ENCODE measurements at regions of chr1 and their contacts with region 1.

Region 1: GRCh38 chr1:92080128-92080985 is at the start of gene BTBD8:
- DNase-seq: peak; percentile 67 to 87 (median 85)
- ATAC-seq: peak; percentile 98
- H3K4me3 ChIP-seq: peak within 1 kb of the TSS; percentile 79
- H3K4me3 Mint-ChIP-seq: peak within 1 kb of the TSS; percentile 87 to 99 (median 98)
- H3K27ac ChIP-seq: peak within 1 kb of the TSS; percentile 74
- H3K27ac Mint-ChIP-seq: peak within 1 kb of the TSS; percentile 85 to 97 (median 93)
- H3K4me1 ChIP-seq: peaks cover 0 to 3% of the 10 kb centered on the region in 2 donors
- H3K4me1 Mint-ChIP-seq: peaks cover 5 to 36% (median 29%) of the 10 kb centered on the region in 7 donors
- H3K27me3 ChIP-seq: no peaks in the 10 kb centered on the region
- H3K27me3 Mint-ChIP-seq: no peaks in the 10 kb centered on the region
- total RNA-seq, gene BTBD8: 2.4 to 11.4 (median 5.3) TPM

Region 2: GRCh38 chr1:92030656-92031107 is 49.7 kb before region 1 on chr1:
- CTCF ChIA-PET with region 1: no interaction called
- POLR2A ChIA-PET with region 1: no interaction called
- intact Hi-C with region 1: loop called in 1 of 2 experiments (anchors 5 kb)
- DNase-seq: peak in 1 of 9 donors; percentile 5
- ATAC-seq: no peak
- H3K4me3 ChIP-seq: peak overlapping the region; percentile 55
- H3K4me3 Mint-ChIP-seq: peak overlapping the region; percentile 70 to 87 (median 80)
- H3K27ac ChIP-seq: no peak overlapping the region
- H3K27ac Mint-ChIP-seq: peak overlapping the region in 4 of 9 donors; percentile 16 to 63 (median 52)
- H3K4me1 ChIP-seq: peaks cover 4 to 7% of the 10 kb centered on the region in 2 donors
- H3K4me1 Mint-ChIP-seq: peaks cover 5 to 24% (median 18%) of the 10 kb centered on the region in 7 donors
- H3K27me3 ChIP-seq: peaks cover 0 to 3% of the 10 kb centered on the region in 2 donors
- H3K27me3 Mint-ChIP-seq: peaks cover 16 to 40% (median 20%) of the 10 kb centered on the region in 5 donors

Region 3: DNA sequence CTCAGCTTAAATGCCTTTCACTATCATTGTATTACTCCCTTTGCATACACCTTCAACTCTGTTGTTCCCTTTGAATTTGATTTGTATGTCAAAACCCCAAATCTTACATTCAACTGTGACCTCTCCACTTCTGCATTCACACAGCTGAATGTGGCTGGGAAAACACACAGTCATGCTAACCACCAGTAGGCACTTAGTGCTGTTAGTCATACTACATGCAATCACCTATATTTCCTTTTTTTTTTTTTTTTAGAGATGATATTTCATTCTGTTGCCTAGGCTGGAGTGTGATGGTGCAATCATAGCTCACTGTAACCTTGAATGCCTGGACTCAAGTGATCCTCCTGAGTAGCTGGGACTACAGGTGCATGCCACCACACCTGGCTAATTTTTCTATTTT is 16.0 kb after region 1 on chr1:
- CTCF ChIA-PET with region 1: no interaction called
- POLR2A ChIA-PET with region 1: no interaction called
- intact Hi-C with region 1: no loop called
- DNase-seq: no peak
- ATAC-seq: peak; percentile 91
- H3K4me3 ChIP-seq: no peak overlapping the region
- H3K4me3 Mint-ChIP-seq: no peak overlapping the region
- H3K27ac ChIP-seq: no peak overlapping the region
- H3K27ac Mint-ChIP-seq: no peak overlapping the region
- H3K4me1 ChIP-seq: no peaks in the 10 kb centered on the region
- H3K4me1 Mint-ChIP-seq: peaks cover 0 to 14% (median 9%) of the 10 kb centered on the region in 7 donors
- H3K27me3 ChIP-seq: no peaks in the 10 kb centered on the region
- H3K27me3 Mint-ChIP-seq: no peaks in the 10 kb centered on the region

Region 4: DNA sequence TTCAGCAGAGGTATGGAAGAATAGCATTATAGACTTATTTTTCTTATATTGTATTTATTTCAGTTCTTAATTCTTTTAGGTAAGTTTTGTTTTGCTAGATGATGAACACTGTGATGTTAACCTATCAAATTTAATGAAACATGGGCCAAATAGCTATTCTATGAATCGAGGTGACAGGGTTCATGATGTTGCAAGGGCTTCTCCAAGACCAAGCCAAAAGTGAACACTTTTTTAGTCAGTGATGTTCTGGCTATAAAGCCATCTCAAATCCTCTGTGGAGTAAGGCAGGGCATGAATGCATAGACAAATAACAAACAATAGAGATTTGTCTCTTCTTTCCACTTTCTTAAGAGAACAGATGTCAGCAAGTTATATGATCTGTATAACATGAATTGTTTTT is 164.0 kb after region 1 on chr1:
- CTCF ChIA-PET with region 1: no interaction called
- POLR2A ChIA-PET with region 1: no interaction called
- intact Hi-C with region 1: loop called in 1 of 2 experiments (anchors 5 kb)
- DNase-seq: no peak
- ATAC-seq: no peak
- H3K4me3 ChIP-seq: no peak overlapping the region
- H3K4me3 Mint-ChIP-seq: no peak overlapping the region
- H3K27ac ChIP-seq: no peak overlapping the region
- H3K27ac Mint-ChIP-seq: peak overlapping the region in 4 of 9 donors; percentile 15 to 53 (median 32)
- H3K4me1 ChIP-seq: no peaks in the 10 kb centered on the region
- H3K4me1 Mint-ChIP-seq: peaks cover 0 to 2% (median 0%) of the 10 kb centered on the region in 7 donors
- H3K27me3 ChIP-seq: no peaks in the 10 kb centered on the region
- H3K27me3 Mint-ChIP-seq: peaks cover 0 to 2% (median 0%) of the 10 kb centered on the region in 5 donors

Region 5: GRCh38 chr1:92599184-92599583 is 518.8 kb after region 1 on chr1:
- CTCF ChIA-PET with region 1: no interaction called
- POLR2A ChIA-PET with region 1: no interaction called
- intact Hi-C with region 1: loop called in 1 of 2 experiments (anchors 5 kb)
- DNase-seq: peak in 6 of 9 donors; percentile 19 to 61 (median 48)
- ATAC-seq: peak; percentile 59
- H3K4me3 ChIP-seq: no peak overlapping the region
- H3K4me3 Mint-ChIP-seq: no peak overlapping the region
- H3K27ac ChIP-seq: no peak overlapping the region
- H3K27ac Mint-ChIP-seq: no peak overlapping the region
- H3K4me1 ChIP-seq: no peaks in the 10 kb centered on the region
- H3K4me1 Mint-ChIP-seq: peaks cover 4 to 30% (median 9%) of the 10 kb centered on the region in 7 donors
- H3K27me3 ChIP-seq: no peaks in the 10 kb centered on the region
- H3K27me3 Mint-ChIP-seq: no peaks in the 10 kb centered on the region

Region 6: DNA sequence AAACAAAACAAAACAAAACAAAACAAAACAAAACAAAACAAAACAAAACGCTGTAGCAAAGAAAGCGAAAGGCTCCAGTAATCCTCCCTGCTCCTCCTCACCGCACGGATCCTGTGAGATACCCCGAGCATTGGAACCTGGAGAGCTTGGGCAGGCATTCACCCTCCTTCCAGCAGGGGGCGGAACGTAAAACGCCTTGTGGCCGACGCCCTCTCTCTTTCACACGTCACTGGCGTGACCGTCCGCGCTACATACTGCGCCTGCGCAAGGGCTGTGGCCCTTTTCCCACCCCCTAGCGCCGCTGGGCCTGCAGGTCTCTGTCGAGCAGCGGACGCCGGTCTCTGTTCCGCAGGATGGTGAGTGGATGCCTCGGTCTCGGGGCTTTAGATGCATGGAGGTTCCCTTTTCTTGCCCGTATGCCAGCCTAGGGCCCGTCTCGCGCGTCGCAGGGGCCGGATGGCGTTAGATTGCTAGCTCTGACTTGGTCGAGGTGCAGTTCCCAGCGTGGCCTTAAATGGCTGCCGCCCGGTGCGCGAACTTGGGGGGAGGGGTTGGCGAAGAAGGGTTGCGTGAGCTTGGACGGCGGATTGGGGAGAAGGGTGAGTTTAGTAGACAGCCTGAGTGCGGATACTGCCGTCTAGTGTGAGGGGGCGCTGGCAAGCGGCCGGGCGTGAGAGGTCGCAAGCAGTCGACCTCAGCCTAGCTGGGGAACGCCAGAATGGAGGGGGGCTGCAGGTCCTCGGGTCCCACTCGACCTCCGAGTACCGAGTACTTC is 751.6 kb after region 1 on chr1 and contains the start of gene RPL5:
- CTCF ChIA-PET with region 1: no interaction called
- POLR2A ChIA-PET with region 1: no interaction called
- intact Hi-C with region 1: loop called in 1 of 2 experiments (anchors 5 kb)
- DNase-seq: peak; percentile 94 to 99 (median 98)
- ATAC-seq: peak; percentile 95
- H3K4me3 ChIP-seq: peak within 1 kb of the TSS; percentile 94
- H3K4me3 Mint-ChIP-seq: peak within 1 kb of the TSS; percentile 94 to 100 (median 98)
- H3K27ac ChIP-seq: peak within 1 kb of the TSS; percentile 94
- H3K27ac Mint-ChIP-seq: peak within 1 kb of the TSS; percentile 98 to 100 (median 99)
- H3K4me1 ChIP-seq: peaks cover 16 to 30% of the 10 kb centered on the region in 2 donors
- H3K4me1 Mint-ChIP-seq: peaks cover 29 to 54% (median 44%) of the 10 kb centered on the region in 7 donors
- H3K27me3 ChIP-seq: no peaks in the 10 kb centered on the region
- H3K27me3 Mint-ChIP-seq: peaks cover 0 to 5% (median 0%) of the 10 kb centered on the region in 5 donors
- total RNA-seq, gene RPL5: 764 to 1,693 (median 1,596) TPM